ENCODE measurements at regions of chr6 and their contacts with region 1.

Region 1: GRCh38 chr6:70369332-70369950 is 43.9 kb upstream of the FAM135A start:
- DNase-seq: peak; percentile 76
- ATAC-seq: peak; percentile 67
- H3K4me3 ChIP-seq: no peak overlapping the region
- H3K27ac ChIP-seq: no peak overlapping the region
- H3K4me1 ChIP-seq: peaks cover 8% of the 10 kb centered on the region; the same call in 1 of the 2 replicates
- H3K27me3 ChIP-seq: peaks cover 38% of the 10 kb centered on the region
- CTCF ChIP-seq: peak; percentile 85

Region 2: GRCh38 chr6:70166088-70166958 is 203.1 kb before region 1 on chr6:
- CTCF ChIA-PET with region 1: no interaction called
- POLR2A ChIA-PET with region 1: no interaction called
- intact Hi-C with region 1: no loop called
- DNase-seq: peak; percentile 52
- ATAC-seq: peak; percentile 90
- H3K4me3 ChIP-seq: peak overlapping the region; percentile 47; the same call in 1 of the 2 replicates
- H3K27ac ChIP-seq: no peak overlapping the region
- H3K4me1 ChIP-seq: no peaks in the 10 kb centered on the region
- H3K27me3 ChIP-seq: peaks cover 21% of the 10 kb centered on the region; the same call in 1 of the 2 replicates
- CTCF ChIP-seq: peak; percentile 67

Region 3: DNA sequence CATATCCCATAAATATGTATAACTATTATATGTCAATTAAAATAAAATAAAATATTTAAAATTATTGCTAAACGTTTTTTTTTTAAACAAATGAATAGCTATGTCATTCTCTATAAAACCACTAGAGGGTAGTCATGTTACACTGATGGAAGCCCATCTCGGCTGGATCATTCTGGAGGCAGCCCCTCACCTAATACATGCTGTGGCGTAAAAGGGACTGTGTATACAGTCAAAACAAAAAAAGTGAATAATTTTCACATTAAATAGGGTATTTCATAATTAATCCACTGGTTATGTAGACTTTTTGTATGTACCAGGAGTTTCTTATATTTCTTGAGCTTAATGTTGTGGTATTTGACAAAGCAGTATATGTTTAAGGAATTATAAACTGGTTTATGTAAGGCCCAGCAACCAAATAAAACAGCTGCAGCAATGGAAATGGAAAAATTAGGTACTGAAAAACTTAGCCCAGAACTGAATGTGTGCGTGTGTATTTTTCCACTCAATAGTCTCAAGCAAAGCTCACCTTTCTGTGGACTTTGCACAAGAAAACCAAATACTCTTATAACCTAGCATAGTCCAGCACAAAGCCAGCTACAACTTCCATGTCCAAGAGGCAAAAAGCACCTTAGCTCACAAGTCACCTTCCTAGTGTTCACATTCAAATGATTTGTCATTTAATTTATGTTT is 148.3 kb before region 1 on chr6:
- CTCF ChIA-PET with region 1: interaction called, 14 read pairs
- POLR2A ChIA-PET with region 1: no interaction called
- intact Hi-C with region 1: loop called (anchors 1 kb)
- DNase-seq: peak; percentile 36
- ATAC-seq: no peak
- H3K4me3 ChIP-seq: no peak overlapping the region
- H3K27ac ChIP-seq: no peak overlapping the region
- H3K4me1 ChIP-seq: no peaks in the 10 kb centered on the region
- H3K27me3 ChIP-seq: peaks cover 15% of the 10 kb centered on the region
- CTCF ChIP-seq: peak; percentile 55

Region 4: GRCh38 chr6:70310063-70310694 is 59.3 kb before region 1 on chr6:
- CTCF ChIA-PET with region 1: interaction called, 41 read pairs
- POLR2A ChIA-PET with region 1: interaction called, 4 read pairs
- intact Hi-C with region 1: loop called (anchors 1 kb)
- DNase-seq: peak; percentile 74
- ATAC-seq: no peak
- H3K4me3 ChIP-seq: no peak overlapping the region
- H3K27ac ChIP-seq: no peak overlapping the region
- H3K4me1 ChIP-seq: peaks cover 10% of the 10 kb centered on the region
- H3K27me3 ChIP-seq: peaks cover 32% of the 10 kb centered on the region
- CTCF ChIP-seq: peak; percentile 80

Region 5: DNA sequence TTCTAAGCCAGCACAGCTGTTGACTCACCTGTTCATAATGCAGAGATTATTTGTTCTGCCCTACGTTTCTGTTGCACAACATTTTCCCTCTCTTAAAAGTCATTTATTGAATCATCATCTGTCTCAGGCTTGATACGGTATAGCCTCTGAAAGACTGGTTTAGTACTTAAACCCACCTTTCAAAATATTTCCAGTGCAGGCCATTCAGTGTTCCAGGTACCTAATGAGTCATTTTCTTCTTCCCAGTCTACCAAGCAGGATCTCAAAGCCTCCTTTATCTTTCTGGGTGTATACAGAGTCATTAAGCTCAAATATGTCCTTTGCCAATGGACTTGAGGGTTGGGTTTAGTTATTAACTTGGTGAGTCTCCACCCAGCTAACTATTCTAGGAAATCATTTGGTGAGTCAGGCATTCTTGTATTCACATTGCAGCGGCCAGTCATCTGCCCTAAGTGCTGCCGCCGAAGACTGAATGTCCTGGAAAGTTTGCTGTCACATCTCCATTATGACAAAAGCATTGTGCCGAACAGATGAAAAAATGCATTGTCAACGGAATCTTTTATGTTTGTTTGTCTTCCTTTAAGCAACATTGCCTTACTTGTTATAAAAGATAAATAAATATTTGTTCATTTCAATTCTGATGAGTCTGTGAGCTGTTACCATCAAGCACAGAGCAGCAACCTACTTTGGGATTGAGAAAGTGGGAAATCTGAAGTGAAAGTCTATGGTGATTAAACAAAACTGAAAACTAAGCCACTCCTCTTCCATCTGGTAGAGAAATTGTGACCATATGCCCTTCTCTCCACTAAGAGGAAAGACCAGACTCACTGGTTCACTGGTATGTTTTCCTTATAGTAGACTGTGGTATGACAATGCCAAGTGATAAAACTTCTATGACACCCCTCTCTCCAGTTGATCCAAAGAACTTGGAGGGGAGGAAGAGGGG is 29.6 kb after region 1 on chr6:
- CTCF ChIA-PET with region 1: no interaction called
- POLR2A ChIA-PET with region 1: no interaction called
- intact Hi-C with region 1: loop called (anchors 1 kb)
- DNase-seq: peak; percentile 89
- ATAC-seq: peak; percentile 85
- H3K4me3 ChIP-seq: peak overlapping the region; percentile 51
- H3K27ac ChIP-seq: peak overlapping the region; percentile 93
- H3K4me1 ChIP-seq: peaks cover 37% of the 10 kb centered on the region
- H3K27me3 ChIP-seq: no peaks in the 10 kb centered on the region
- CTCF ChIP-seq: no peak

Region 6: GRCh38 chr6:70413114-70413991 is 43.9 kb after region 1 on chr6 and contains the start of gene FAM135A:
- CTCF ChIA-PET with region 1: interaction called, 4 read pairs
- POLR2A ChIA-PET with region 1: interaction called, 10 read pairs
- intact Hi-C with region 1: loop called (anchors 1 kb)
- DNase-seq: peak; percentile 97
- ATAC-seq: peak; percentile 91
- H3K4me3 ChIP-seq: peak within 1 kb of the TSS; percentile 90
- H3K27ac ChIP-seq: no peak within 1 kb of the TSS
- H3K4me1 ChIP-seq: peaks cover 14% of the 10 kb centered on the region
- H3K27me3 ChIP-seq: no peaks in the 10 kb centered on the region
- CTCF ChIP-seq: no peak
- total RNA-seq, gene FAM135A: 15.5 and 18.1 TPM in 2 replicates